ENCODE measurements at regions of chr11 and their contacts with region 1.

Region 1: DNA sequence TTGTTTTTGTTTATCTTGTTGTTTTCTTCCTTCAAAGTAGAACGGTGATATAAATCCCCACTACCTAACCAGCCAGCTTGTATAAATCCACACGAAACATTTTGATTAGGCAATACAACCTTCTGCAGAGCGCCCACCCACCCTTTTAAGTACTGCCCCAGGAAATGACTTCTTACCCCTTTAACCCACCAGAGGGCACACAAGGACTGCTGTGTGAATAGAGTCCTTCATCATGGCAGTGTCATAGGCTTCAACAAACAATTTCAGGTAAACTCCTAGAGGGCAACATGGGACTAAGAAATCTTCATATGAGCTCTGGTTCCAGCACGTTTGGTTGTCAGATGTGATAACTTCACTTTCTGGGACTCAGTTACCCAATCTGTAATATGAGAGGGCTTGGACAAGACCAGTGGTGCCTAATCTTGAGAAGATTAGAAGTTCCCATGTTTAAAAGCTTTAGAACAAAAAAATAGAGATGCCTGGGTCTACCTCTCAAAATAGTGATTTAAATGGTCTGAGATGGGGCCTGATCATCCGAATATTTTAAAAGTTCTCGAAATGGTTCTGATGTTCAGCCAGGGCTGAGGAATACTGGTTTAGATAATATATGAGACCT is 56.1 kb downstream of the PIWIL4 start:
- DNase-seq: peak; percentile 86
- H3K4me3 Mint-ChIP-seq: no peak overlapping the region
- H3K27ac Mint-ChIP-seq: no peak overlapping the region
- H3K4me1 Mint-ChIP-seq: peaks cover 6% of the 10 kb centered on the region
- H3K27me3 Mint-ChIP-seq: no peaks in the 10 kb centered on the region
- CTCF ChIP-seq: peak; percentile 81

Region 2: GRCh38 chr11:93330446-93330984 is 1292.7 kb before region 1 on chr11 and contains the start of gene DEUP1:
- CTCF ChIA-PET with region 1: no interaction called
- POLR2A ChIA-PET with region 1: no interaction called
- intact Hi-C with region 1: no loop called
- DNase-seq: no peak
- H3K4me3 Mint-ChIP-seq: peak within 1 kb of the TSS; percentile 67
- H3K27ac Mint-ChIP-seq: peak within 1 kb of the TSS; percentile 35
- H3K4me1 Mint-ChIP-seq: no peaks in the 10 kb centered on the region
- H3K27me3 Mint-ChIP-seq: no peaks in the 10 kb centered on the region
- CTCF ChIP-seq: no peak
- total RNA-seq, gene DEUP1: not detected in 2 replicates

Region 3: DNA sequence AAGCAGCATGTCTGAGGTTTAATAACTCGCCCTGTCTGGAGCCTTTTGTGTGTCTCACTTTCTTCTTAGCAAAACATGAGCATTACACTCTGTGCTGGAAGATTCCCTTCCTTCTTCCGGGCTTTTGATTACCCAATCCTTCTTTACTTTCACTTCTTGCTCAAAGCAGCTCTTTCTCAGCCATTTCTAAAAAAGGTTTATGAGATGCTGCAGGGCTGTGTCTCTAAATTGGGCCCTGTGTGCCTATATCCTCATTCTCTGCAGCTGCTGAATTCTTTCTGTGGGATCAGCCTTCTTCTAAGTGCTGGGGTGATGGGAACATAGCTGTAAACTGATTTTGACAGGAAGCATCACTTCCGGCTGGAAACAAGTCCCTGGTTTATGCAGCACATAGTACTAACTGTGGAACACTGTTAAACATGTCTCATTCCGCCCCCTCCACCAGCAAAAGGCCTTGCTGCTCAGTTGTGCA is 15.7 kb after region 1 on chr11:
- CTCF ChIA-PET with region 1: interaction called, 18 read pairs
- POLR2A ChIA-PET with region 1: interaction called, 3 read pairs
- intact Hi-C with region 1: no loop called
- DNase-seq: peak; percentile 41
- H3K4me3 Mint-ChIP-seq: peak overlapping the region; percentile 49
- H3K27ac Mint-ChIP-seq: peak overlapping the region; percentile 76
- H3K4me1 Mint-ChIP-seq: peaks cover 17% of the 10 kb centered on the region
- H3K27me3 Mint-ChIP-seq: no peaks in the 10 kb centered on the region
- CTCF ChIP-seq: no peak

Region 4: GRCh38 chr11:94747146-94748080 is 124.2 kb after region 1 on chr11:
- CTCF ChIA-PET with region 1: interaction called, 18 read pairs
- POLR2A ChIA-PET with region 1: interaction called, 3 read pairs
- intact Hi-C with region 1: no loop called
- DNase-seq: peak; percentile 64
- H3K4me3 Mint-ChIP-seq: peak overlapping the region; percentile 2
- H3K27ac Mint-ChIP-seq: peak overlapping the region; percentile 95
- H3K4me1 Mint-ChIP-seq: peaks cover 59% of the 10 kb centered on the region
- H3K27me3 Mint-ChIP-seq: no peaks in the 10 kb centered on the region
- CTCF ChIP-seq: no peak

Region 5: GRCh38 chr11:94803491-94803890 is 180.3 kb after region 1 on chr11:
- CTCF ChIA-PET with region 1: interaction called, 10 read pairs
- POLR2A ChIA-PET with region 1: no interaction called
- intact Hi-C with region 1: no loop called
- DNase-seq: no peak
- H3K4me3 Mint-ChIP-seq: no peak overlapping the region
- H3K27ac Mint-ChIP-seq: no peak overlapping the region
- H3K4me1 Mint-ChIP-seq: no peaks in the 10 kb centered on the region
- H3K27me3 Mint-ChIP-seq: no peaks in the 10 kb centered on the region
- CTCF ChIP-seq: no peak

Region 6: GRCh38 chr11:94858023-94858705 is 234.9 kb after region 1 on chr11:
- CTCF ChIA-PET with region 1: interaction called, 64 read pairs
- POLR2A ChIA-PET with region 1: no interaction called
- intact Hi-C with region 1: no loop called
- DNase-seq: no peak
- H3K4me3 Mint-ChIP-seq: no peak overlapping the region
- H3K27ac Mint-ChIP-seq: no peak overlapping the region
- H3K4me1 Mint-ChIP-seq: no peaks in the 10 kb centered on the region
- H3K27me3 Mint-ChIP-seq: no peaks in the 10 kb centered on the region
- CTCF ChIP-seq: no peak

Region 7: GRCh38 chr11:94958121-94958696 is 335.0 kb after region 1 on chr11:
- CTCF ChIA-PET with region 1: interaction called, 31 read pairs
- POLR2A ChIA-PET with region 1: no interaction called
- intact Hi-C with region 1: no loop called
- DNase-seq: no peak
- H3K4me3 Mint-ChIP-seq: no peak overlapping the region
- H3K27ac Mint-ChIP-seq: peak overlapping the region; percentile 73
- H3K4me1 Mint-ChIP-seq: peaks cover 8% of the 10 kb centered on the region
- H3K27me3 Mint-ChIP-seq: no peaks in the 10 kb centered on the region
- CTCF ChIP-seq: no peak

Region 8: DNA sequence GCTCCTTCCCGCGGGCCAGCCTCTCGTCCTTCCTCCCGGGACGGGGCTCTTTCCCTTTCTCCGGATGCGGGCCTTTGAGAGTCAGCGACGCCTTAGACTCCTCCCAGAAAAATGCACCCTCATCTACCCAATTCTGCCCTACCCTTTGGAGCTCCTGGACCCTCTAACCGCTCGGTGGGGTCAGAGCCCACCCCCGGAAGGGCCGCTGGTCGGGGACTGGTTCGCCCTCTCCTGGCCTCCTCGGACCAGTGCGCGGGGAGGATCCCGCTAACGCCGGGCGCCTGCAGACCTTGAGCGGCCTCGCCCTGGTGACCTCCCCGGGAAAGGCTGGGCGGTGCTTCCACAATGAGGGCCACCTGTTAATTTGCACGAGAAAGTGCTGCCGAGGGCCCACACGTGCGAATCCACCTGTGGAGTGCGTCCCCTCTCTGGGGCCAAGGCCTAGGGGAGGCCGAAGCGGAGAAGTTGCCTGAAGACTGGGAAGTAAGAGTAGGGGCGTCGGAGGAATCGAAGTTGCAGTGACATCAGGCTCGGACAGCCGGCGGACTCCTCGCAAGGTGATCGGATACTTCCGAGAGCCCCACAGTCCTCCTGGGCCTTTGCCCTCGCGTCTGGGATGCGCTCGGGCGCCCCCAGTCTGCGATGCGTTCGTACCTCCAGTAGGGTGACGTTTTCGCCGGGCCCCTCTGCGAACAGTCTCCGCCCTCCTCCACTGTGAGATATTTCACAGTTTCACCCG is 527.9 kb after region 1 on chr11:
- CTCF ChIA-PET with region 1: interaction called, 13 read pairs
- POLR2A ChIA-PET with region 1: no interaction called
- intact Hi-C with region 1: loop called (anchors 1 kb)
- DNase-seq: peak; percentile 95
- H3K4me3 Mint-ChIP-seq: peak overlapping the region; percentile 81
- H3K27ac Mint-ChIP-seq: peak overlapping the region; percentile 82
- H3K4me1 Mint-ChIP-seq: peaks cover 44% of the 10 kb centered on the region
- H3K27me3 Mint-ChIP-seq: no peaks in the 10 kb centered on the region
- CTCF ChIP-seq: peak; percentile 63